ENCODE measurements at regions of chr5 and their contacts with region 1.

Region 1: GRCh38 chr5:170278611-170279452 is 18.7 kb downstream of the LCP2 start:
- DNase-seq: peak; percentile 98 to 100 (median 99)
- H3K4me3 ChIP-seq: peak overlapping the region in 5 of 7 experiments; percentile 33 to 70 (median 53)
- H3K27ac ChIP-seq: peak overlapping the region; percentile 83
- H3K4me1 ChIP-seq: peaks cover 29 to 89% (median 82%) of the 10 kb centered on the region in 4 experiments
- H3K27me3 ChIP-seq: no peaks in the 10 kb centered on the region

Region 2: GRCh38 chr5:170312666-170313065 is 33.8 kb after region 1 on chr5:
- CTCF ChIA-PET with region 1: interaction called, 11 read pairs
- POLR2A ChIA-PET with region 1: no interaction called
- DNase-seq: peak in 2 of 3 donors; percentile 80 to 85
- H3K4me3 ChIP-seq: peak overlapping the region in 1 of 7 experiments; percentile 1
- H3K27ac ChIP-seq: no peak overlapping the region
- H3K4me1 ChIP-seq: peaks cover 13 to 43% (median 37%) of the 10 kb centered on the region in 4 experiments
- H3K27me3 ChIP-seq: no peaks in the 10 kb centered on the region

Region 3: DNA sequence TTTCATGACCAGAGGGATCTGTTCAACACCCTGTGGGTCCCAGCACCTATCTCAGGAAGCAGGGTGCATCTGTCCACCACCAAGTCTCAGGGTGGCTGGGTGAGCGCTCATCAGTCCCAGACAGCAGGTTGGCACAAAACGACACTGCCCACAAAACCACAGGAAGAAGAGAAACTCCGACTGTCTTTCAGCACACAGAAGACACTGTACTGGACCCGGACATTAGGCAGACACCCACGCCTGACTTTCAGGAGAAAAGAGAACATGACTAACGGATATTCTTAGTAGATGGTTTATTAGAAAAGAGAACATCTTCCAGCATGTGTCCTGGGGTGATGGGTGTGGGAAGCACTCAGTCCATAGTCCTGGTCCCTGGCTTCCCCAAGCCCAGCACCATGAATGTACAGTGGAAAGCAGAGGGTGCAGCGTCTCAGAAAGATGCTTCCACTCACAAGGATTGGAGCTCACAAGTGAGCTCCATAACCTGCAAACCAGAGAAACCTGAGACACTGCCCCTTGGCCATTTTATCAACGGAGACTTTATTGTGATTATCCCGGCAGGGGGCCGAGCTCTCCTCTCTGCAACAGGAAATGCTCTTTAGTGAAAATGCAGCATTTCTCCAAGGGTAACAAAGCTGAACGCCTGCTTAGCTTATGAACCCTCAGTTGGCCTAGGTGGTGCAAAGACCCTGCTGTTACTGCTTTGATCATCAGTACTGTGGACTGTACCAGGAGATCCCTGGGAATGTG is 54.5 kb after region 1 on chr5:
- CTCF ChIA-PET with region 1: interaction called, 29 read pairs
- POLR2A ChIA-PET with region 1: interaction called, 8 read pairs
- DNase-seq: peak; percentile 50 to 89 (median 83)
- H3K4me3 ChIP-seq: peak overlapping the region in 2 of 7 experiments; percentile 10 to 46
- H3K27ac ChIP-seq: peak overlapping the region in 1 of 2 experiments; percentile 49
- H3K4me1 ChIP-seq: peaks cover 32 to 90% (median 71%) of the 10 kb centered on the region in 4 experiments
- H3K27me3 ChIP-seq: no peaks in the 10 kb centered on the region

Region 4: GRCh38 chr5:170348137-170348633 is 69.4 kb after region 1 on chr5:
- CTCF ChIA-PET with region 1: interaction called, 59 read pairs
- POLR2A ChIA-PET with region 1: interaction called, 5 read pairs
- DNase-seq: peak; percentile 39 to 54 (median 54)
- H3K4me3 ChIP-seq: no peak overlapping the region
- H3K27ac ChIP-seq: no peak overlapping the region
- H3K4me1 ChIP-seq: peaks cover 0 to 17% (median 9%) of the 10 kb centered on the region in 4 experiments
- H3K27me3 ChIP-seq: no peaks in the 10 kb centered on the region

Region 5: DNA sequence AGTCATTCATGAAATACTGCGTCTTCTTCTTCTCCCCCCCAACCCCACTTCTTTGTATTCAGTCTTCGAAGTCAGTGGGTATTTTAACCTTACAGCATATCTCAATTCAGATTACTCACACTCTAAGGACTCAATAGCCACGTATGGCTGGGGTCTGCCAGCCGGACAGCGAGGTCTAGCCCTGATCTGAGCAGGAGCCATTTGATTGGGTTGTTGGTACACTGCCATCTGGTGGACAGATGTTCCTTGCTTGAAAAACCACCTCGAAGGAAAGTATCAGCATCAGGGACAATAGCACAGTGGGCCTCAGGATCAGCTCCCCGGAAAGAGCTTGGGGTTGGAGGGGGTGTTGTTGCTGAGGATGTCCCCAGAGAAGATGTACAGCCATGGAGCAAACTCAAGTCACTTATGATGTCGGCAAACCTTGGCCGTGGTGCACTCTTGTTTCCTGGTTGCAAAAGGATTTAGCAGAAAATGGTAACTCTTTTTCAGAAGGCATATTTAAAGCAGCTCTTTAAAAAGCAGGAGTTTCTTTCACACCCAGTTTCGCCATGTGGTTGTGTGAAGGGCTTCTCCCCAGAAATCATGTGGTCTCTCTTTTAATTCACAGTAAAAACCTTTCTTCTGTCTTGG is 142.1 kb after region 1 on chr5:
- CTCF ChIA-PET with region 1: interaction called, 21 read pairs
- POLR2A ChIA-PET with region 1: no interaction called
- DNase-seq: peak; percentile 79 to 84 (median 80)
- H3K4me3 ChIP-seq: no peak overlapping the region
- H3K27ac ChIP-seq: no peak overlapping the region
- H3K4me1 ChIP-seq: peaks cover 0 to 29% (median 16%) of the 10 kb centered on the region in 4 experiments
- H3K27me3 ChIP-seq: no peaks in the 10 kb centered on the region

Measured in common myeloid progenitor, CD34-positive (primary cell).